Activated naive CD4-positive, alpha-beta T cell treated with anti-CD3 and anti-CD28 coated beads, Interleukin-2, amount 10 ng/mL, durations not matched to agents 7 days and 5 days (primary cell): ENCODE measurements at regions of chr9 and their contacts with region 1.

Region 1: DNA sequence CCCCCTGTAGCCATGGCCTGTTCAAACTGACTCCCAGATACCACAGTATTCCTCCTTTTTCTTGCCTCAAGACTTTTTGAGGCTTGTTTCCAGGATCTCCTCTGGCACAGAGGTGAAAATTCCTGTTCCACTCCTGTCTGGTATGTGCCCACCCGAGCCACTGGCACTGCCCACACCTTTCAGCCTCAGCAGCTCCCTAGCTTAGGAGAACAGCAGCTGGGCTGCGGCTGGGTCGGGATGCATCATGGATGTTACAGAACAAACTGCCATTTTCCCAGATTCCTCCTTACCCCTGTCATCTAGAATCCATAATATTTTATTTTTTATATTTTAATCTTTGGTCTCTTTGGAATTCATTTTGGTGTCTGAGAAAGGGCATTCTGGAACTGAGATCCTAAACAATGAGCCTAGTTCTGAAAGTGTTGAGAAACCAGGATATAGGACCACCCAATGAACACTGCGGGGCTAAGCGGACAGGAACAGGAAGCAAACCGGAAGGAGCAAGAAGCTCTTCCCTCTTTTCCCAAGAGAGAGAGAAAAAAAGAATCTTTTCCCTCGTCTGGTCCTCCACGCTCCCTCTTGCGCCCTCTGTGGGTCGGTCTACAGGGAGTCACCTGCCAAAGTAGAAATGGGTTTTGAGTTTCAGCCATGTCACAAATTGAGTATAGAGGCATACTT is 12.5 kb downstream of the OR2S2 start:
- DNase-seq: peak; percentile 80
- H3K4me3 Mint-ChIP-seq: no peak overlapping the region
- H3K27ac Mint-ChIP-seq: no peak overlapping the region
- H3K4me1 Mint-ChIP-seq: peaks cover 32% of the 10 kb centered on the region
- H3K27me3 Mint-ChIP-seq: peaks cover 14% of the 10 kb centered on the region

Region 2: GRCh38 chr9:35790385-35791296 is 154.8 kb before region 1 on chr9:
- CTCF ChIA-PET with region 1: no interaction called
- DNase-seq: peak; percentile 71
- H3K4me3 Mint-ChIP-seq: no peak overlapping the region
- H3K27ac Mint-ChIP-seq: no peak overlapping the region
- H3K4me1 Mint-ChIP-seq: peaks cover 7% of the 10 kb centered on the region
- H3K27me3 Mint-ChIP-seq: no peaks in the 10 kb centered on the region

Region 3: DNA sequence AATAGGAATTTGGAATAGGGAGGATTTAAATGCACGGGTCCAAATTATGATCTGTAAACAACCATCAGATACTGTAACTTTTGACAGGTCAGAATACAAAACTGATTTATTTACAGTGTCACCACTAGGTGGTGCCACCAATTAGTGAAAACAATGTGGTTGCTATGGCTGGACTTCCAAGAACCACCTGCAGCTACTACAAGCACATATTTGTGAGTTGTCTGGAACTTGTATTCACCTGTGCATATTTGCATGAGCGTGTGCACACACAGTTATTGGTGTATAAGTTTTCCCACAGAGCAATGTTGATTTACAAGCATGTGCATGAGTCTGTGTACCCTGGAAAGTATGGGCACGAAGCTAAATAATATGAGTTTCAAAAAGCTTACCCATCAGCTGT is 42.4 kb before region 1 on chr9:
- CTCF ChIA-PET with region 1: interaction called, 132 read pairs
- DNase-seq: peak; percentile 54
- H3K4me3 Mint-ChIP-seq: no peak overlapping the region
- H3K27ac Mint-ChIP-seq: no peak overlapping the region
- H3K4me1 Mint-ChIP-seq: peaks cover 18% of the 10 kb centered on the region
- H3K27me3 Mint-ChIP-seq: peaks cover 22% of the 10 kb centered on the region

Region 4: DNA sequence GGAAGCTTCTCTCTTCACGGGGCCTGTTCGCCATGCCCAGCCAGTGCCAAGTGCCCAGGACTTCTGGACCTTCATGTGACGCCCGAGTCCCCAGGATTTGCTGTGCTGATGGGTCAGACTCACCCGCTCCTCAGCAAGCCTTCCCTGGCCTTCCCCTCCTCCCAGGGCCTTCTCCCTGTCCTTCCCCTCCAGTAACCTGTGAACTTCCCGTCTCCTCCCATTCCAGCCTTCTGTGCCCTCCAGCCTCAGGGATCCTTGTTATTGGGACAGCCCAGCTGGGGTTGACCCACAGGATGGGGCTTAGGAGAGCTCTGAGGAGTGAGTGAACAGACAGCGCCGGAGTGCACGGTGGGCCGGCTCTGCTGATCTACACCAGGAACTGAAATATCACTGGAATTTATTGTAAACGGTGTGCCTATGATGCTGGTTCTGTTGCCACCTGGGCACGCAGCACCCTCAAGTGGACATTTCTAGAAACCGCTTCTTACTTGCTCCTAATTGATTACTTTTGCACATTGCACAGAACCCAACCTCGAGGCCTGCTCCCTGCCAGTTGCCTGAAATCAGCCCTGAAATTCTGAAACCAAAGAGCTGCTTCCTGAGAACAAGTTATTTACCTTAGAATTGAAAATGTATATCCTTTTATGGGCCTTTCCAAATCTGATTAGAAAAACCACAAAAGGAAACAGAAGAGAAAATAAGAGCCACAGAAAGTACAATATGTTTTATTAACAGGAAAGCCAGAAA is 34.7 kb before region 1 on chr9:
- CTCF ChIA-PET with region 1: interaction called, 132 read pairs
- DNase-seq: peak; percentile 72
- H3K4me3 Mint-ChIP-seq: peak overlapping the region; percentile 44
- H3K27ac Mint-ChIP-seq: peak overlapping the region; percentile 96
- H3K4me1 Mint-ChIP-seq: peaks cover 53% of the 10 kb centered on the region
- H3K27me3 Mint-ChIP-seq: peaks cover 4% of the 10 kb centered on the region

Region 5: GRCh38 chr9:35923927-35924763 is 21.3 kb before region 1 on chr9:
- CTCF ChIA-PET with region 1: interaction called, 11 read pairs
- DNase-seq: no peak
- H3K4me3 Mint-ChIP-seq: no peak overlapping the region
- H3K27ac Mint-ChIP-seq: no peak overlapping the region
- H3K4me1 Mint-ChIP-seq: no peaks in the 10 kb centered on the region
- H3K27me3 Mint-ChIP-seq: peaks cover 16% of the 10 kb centered on the region

Region 6: DNA sequence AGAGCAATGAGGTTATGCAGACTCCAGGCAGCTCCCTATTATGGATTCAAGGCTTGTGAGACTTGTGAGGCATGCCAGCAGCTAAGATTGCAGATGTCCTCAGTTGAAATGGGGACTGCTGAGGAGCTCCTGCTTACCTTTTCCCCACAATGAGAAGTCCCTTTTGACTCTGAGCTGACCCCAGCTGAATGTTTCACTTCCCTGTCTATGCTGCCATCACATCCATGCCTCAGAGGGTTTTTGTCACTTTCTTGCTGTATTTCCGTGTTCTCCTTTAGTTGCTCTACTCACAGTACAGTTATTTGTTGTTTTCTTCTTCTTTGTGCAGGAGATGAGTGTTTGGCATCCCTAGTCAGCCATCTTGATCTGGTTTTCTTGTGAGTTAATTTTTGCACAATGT is 31.2 kb after region 1 on chr9:
- CTCF ChIA-PET with region 1: no interaction called
- DNase-seq: no peak
- H3K4me3 Mint-ChIP-seq: no peak overlapping the region
- H3K27ac Mint-ChIP-seq: no peak overlapping the region
- H3K4me1 Mint-ChIP-seq: peaks cover 9% of the 10 kb centered on the region
- H3K27me3 Mint-ChIP-seq: peaks cover 59% of the 10 kb centered on the region

Region 7: GRCh38 chr9:36008774-36009300 is 63.4 kb after region 1 on chr9:
- CTCF ChIA-PET with region 1: interaction called, 12 read pairs
- DNase-seq: peak; percentile 74
- H3K4me3 Mint-ChIP-seq: no peak overlapping the region
- H3K27ac Mint-ChIP-seq: no peak overlapping the region
- H3K4me1 Mint-ChIP-seq: peaks cover 17% of the 10 kb centered on the region
- H3K27me3 Mint-ChIP-seq: peaks cover 50% of the 10 kb centered on the region

Region 8: GRCh38 chr9:36023260-36024048 is 78.0 kb after region 1 on chr9:
- CTCF ChIA-PET with region 1: interaction called, 12 read pairs
- DNase-seq: peak; percentile 81
- H3K4me3 Mint-ChIP-seq: no peak overlapping the region
- H3K27ac Mint-ChIP-seq: peak overlapping the region; percentile 7
- H3K4me1 Mint-ChIP-seq: no peaks in the 10 kb centered on the region
- H3K27me3 Mint-ChIP-seq: peaks cover 15% of the 10 kb centered on the region

Region 9: GRCh38 chr9:36716496-36716895 is 771.0 kb after region 1 on chr9:
- CTCF ChIA-PET with region 1: no interaction called
- DNase-seq: no peak
- H3K4me3 Mint-ChIP-seq: no peak overlapping the region
- H3K27ac Mint-ChIP-seq: no peak overlapping the region
- H3K4me1 Mint-ChIP-seq: no peaks in the 10 kb centered on the region
- H3K27me3 Mint-ChIP-seq: peaks cover 23% of the 10 kb centered on the region